ENCODE measurements at regions of chr16 and their contacts with region 1.

Region 1: DNA sequence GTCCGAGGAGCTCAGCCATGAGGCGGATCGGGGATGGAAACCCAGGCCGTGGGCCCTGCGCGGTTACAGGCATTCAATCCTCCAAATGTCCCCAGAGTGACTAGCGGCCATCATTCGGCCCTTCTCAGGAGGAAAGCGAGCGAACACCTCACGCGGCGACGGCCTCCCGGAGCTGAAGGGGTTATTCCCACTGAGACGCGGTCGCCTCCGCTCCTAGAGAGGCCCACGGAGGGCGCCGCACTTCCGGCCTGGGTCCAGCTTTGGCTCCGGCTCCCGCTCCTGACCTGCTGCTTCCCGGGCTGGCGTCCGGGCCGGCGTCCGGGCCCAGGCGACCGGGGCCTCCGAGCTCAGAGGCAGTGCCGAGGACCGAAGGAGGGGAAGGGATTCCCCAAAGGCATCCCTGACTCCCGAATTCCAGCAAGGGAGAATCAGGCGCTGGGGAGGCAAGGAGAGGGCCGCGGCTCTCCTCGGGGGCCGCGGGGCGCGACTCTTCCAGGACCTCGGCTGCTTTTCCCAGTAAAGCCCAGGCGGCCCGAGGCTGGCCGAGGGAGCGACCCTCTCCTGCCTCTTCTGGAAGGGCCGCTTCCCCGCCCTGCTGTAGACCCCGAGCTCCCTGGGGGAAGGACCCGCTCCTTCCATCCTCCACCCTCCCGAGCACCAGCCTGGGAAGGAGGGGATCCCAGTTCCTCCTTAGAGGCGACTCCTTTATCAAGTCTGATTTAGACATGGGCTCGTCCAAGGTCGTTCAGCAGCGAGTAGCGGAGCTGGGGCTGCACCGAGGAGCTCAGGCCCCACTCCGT is 18.6 kb upstream of the ZNF629 start:
- DNase-seq: peak; percentile 54
- ATAC-seq: peak; percentile 73
- H3K4me3 Mint-ChIP-seq: peak overlapping the region; percentile 82
- H3K27ac Mint-ChIP-seq: peak overlapping the region; percentile 30
- H3K4me1 Mint-ChIP-seq: peaks cover 22% of the 10 kb centered on the region
- H3K27me3 Mint-ChIP-seq: no peaks in the 10 kb centered on the region
- CTCF ChIP-seq: no peak

Region 2: GRCh38 chr16:30571695-30572600 is 233.6 kb before region 1 on chr16 and contains the start of gene ZNF688:
- CTCF ChIA-PET with region 1: no interaction called
- POLR2A ChIA-PET with region 1: no interaction called
- intact Hi-C with region 1: no loop called
- DNase-seq: peak; percentile 78
- ATAC-seq: peak; percentile 86
- H3K4me3 Mint-ChIP-seq: peak within 1 kb of the TSS; percentile 89
- H3K27ac Mint-ChIP-seq: peak within 1 kb of the TSS; percentile 96
- H3K4me1 Mint-ChIP-seq: peaks cover 41% of the 10 kb centered on the region
- H3K27me3 Mint-ChIP-seq: no peaks in the 10 kb centered on the region
- CTCF ChIP-seq: no peak
- total RNA-seq, gene ZNF688: 13.9 and 14.7 TPM in 2 replicates

Region 3: DNA sequence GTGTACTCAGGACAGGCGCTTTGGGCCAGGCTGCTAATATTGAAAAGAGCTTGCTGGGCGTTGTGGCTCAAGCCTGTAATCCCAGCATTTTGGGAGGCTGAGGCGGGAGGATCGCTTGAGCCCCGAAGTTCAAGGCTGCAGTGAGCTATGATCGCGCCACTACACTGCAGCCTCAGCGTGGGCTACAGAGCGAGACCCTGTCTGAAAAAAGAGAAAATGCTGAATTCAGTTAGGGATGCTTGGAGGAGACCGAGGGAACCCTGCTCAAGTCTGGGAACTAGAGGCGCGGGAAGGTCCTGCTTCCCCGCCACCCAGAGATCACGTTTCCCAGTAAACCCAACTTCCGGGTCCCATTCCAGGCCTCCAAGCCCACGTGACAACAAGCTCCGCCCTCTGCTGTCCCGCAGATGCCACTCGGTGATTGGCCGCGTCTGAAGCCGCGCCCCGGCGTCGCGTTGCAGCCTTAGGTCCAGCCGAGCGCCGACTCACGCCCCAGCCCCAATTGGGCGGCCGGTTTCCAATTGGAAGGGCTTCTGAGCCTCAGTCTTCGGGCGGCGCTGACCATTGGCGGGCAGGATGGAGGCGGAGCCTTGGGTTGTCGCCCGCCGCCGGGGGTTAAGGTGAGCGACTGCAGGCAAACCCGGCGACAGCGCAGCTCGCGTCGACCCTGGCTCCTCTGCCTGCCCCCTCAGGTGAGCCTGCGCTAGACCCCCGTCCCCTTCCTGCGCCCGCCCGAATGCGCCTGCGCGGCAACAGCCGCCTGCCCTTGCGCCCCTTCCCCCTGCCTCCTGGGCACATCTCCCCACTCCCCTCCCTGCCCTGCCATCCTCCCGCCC is 57.6 kb before region 1 on chr16 and contains the start of gene PHKG2:
- CTCF ChIA-PET with region 1: no interaction called
- POLR2A ChIA-PET with region 1: interaction called, 16 read pairs
- intact Hi-C with region 1: loop called (anchors 5 kb)
- DNase-seq: peak; percentile 90
- ATAC-seq: peak; percentile 98
- H3K4me3 Mint-ChIP-seq: peak within 1 kb of the TSS; percentile 91
- H3K27ac Mint-ChIP-seq: peak within 1 kb of the TSS; percentile 87
- H3K4me1 Mint-ChIP-seq: peaks cover 24% of the 10 kb centered on the region
- H3K27me3 Mint-ChIP-seq: no peaks in the 10 kb centered on the region
- CTCF ChIP-seq: no peak
- total RNA-seq, gene PHKG2: 45.3 and 51.4 TPM in 2 replicates

Region 4: GRCh38 chr16:30775392-30776188 is 30.0 kb before region 1 on chr16:
- CTCF ChIA-PET with region 1: no interaction called
- POLR2A ChIA-PET with region 1: interaction called, 7 read pairs
- intact Hi-C with region 1: loop called (anchors 5 kb)
- DNase-seq: peak; percentile 48
- ATAC-seq: peak; percentile 82
- H3K4me3 Mint-ChIP-seq: peak overlapping the region; percentile 89
- H3K27ac Mint-ChIP-seq: peak overlapping the region; percentile 61
- H3K4me1 Mint-ChIP-seq: peaks cover 21% of the 10 kb centered on the region
- H3K27me3 Mint-ChIP-seq: peaks cover 11% of the 10 kb centered on the region
- CTCF ChIP-seq: no peak

Region 5: DNA sequence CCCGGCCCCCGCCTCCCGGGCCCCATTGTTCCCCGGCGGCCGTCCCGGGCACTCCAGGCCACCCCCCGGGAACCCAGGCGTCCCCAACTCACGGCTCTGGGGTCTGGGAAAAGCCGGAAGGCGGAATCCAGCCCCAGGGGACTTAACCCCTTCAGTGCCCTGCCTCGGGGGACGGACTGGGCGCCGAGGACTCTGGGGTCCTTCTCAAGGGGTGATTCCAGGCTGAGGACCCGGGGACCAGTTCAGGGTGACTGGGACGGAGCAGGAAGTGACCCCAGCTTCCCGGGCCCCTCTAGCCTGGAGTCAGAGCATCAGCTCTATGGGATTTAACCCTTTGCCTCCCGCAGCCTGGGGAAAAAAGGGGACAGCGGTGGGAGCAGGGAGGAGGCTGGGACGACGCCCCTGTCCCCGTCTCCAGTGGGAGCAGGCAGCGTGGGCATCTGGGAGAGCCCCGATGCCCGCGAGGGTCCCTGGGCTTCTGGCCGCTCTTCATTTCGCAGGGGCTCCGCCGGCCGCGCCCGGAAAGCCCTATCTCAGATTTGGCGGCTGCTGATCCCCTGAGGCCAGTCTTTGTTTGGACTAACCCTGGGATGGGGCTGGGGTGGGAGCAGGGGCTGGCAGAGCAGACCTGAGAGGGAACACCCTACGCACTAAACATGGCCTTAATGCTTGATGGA is 18.5 kb before region 1 on chr16 and contains the start of gene ZNF629:
- CTCF ChIA-PET with region 1: interaction called, 5 read pairs
- POLR2A ChIA-PET with region 1: interaction called, 24 read pairs
- intact Hi-C with region 1: loop called (anchors 1 kb)
- DNase-seq: peak; percentile 34
- ATAC-seq: peak; percentile 69
- H3K4me3 Mint-ChIP-seq: peak within 1 kb of the TSS; percentile 85
- H3K27ac Mint-ChIP-seq: no peak within 1 kb of the TSS
- H3K4me1 Mint-ChIP-seq: peaks cover 17% of the 10 kb centered on the region
- H3K27me3 Mint-ChIP-seq: peaks cover 8% of the 10 kb centered on the region
- CTCF ChIP-seq: no peak
- total RNA-seq, gene ZNF629: 9.1 and 9.3 TPM in 2 replicates

Region 6: DNA sequence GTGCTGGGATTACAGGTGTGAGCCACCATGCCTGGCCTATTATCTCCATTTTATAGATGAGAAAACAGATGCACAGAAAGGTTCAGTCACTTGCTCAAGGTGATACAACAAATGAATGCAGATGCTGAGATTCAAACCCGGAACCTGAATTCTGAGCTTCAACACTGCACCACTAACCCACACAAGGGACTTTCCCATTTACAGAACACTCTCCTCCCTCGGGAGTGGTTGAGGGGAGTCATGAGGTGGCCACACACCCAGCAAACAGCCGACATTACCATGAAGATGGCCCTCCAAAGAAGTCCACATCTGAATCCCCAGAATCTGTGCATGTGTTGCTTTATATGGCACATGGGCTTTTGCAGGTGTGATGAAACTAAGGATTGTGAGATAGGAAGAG is 79.2 kb after region 1 on chr16:
- CTCF ChIA-PET with region 1: no interaction called
- POLR2A ChIA-PET with region 1: interaction called, 12 read pairs
- intact Hi-C with region 1: no loop called
- DNase-seq: no peak
- ATAC-seq: peak; percentile 99
- H3K4me3 Mint-ChIP-seq: peak overlapping the region; percentile 8
- H3K27ac Mint-ChIP-seq: peak overlapping the region; percentile 59
- H3K4me1 Mint-ChIP-seq: peaks cover 33% of the 10 kb centered on the region
- H3K27me3 Mint-ChIP-seq: no peaks in the 10 kb centered on the region
- CTCF ChIP-seq: no peak

Measured in activated B cell treated with CpG ODN at 0.5 μM for 24 hours (primary cell).